Left cardiac atrium (tissue), 4 donors: ENCODE measurements at regions of chr12 and their contacts with region 1.

Region 1: DNA sequence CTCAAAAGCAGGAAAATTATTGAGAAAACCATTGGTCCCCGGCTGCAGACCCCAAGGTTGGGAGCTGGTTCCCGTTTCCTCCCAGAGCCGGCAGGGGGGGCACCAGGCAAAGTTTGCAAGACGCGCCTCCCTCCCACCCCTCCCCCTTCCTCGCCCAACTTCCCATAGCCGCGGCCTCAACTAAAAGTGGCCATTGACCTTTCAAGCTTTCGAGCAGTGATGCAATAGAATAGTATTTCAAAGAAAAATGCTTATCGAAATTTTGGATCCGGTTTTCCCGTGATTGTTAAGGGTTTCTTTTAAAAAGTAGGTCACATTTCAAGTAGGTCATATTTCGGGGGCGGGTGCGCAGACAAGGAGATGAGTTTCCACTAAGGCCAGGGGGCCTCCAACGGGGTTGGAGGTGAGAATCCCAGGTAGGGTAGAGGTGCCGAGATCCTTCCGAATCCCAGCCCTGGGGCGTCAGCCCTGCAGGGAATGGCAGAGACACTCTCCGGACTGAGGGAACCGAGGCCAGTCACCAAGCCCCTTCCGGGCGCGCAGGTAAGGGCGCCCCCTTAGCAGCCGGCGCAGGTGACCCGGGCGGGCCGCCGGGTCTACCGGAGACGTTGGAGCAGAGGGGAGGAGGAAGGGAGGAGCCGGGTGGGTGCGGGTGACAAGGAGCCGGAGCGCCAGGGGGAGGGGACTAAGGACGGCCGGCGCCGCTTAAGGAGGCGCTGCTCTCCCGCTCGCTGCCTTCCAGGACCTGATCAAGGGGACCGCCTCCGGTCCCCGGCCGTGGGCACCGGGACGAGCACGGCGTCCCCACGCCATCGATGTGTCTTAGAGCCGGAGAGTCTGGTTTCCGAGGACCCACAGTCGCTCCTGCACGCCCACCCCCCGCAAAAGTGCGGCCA is 2.6 kb upstream of the SOCS2 start:
- DNase-seq: peak; percentile 89
- ATAC-seq: peak; percentile 73 to 83

Region 2: GRCh38 chr12:93502802-93503623 is 66.9 kb before region 1 on chr12:
- intact Hi-C with region 1: loop called in 1 of 2 experiments (anchors 5 kb)
- DNase-seq: no peak
- ATAC-seq: no peak

Region 3: DNA sequence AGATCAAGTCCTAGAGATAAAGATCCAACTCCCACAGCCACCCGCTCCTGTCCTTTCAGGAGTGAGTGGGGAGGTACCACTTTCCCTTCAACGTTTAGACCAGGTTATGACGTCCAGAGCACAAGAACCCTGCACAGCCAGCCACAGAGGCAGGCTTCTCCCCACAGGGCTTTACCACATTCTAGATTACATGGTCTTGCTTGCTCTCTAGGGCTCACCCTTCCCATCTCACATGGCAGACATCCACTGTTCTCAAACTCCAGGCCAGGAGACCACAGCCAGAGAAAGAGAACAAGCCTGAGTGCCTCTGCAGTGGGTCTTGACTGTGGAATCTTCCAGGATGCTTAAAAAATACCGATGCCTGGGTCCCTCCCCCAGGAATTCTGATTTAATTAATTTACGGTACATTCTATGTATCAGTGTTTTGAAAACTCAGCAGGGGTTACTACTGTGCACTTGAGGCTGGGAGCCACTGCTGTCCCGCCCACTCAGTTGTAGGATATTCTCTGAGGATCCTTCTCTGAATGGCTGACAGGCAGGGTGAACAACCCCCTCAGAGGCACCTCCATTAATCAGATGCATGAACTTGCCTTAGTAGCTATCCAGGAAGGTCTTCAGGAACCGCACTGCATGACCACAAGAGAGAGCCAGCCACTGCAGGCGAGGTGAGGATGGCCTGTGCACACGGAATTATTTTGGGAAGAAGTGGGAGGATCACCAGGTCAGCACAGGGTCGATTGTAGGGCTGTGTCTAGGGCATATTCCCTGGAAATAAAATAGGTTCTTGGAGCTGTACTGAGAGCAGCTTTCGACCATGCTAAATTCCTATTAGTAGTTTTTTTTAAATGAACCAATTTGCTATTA is 18.9 kb before region 1 on chr12:
- intact Hi-C with region 1: no loop called
- DNase-seq: no peak
- ATAC-seq: no peak

Region 4: DNA sequence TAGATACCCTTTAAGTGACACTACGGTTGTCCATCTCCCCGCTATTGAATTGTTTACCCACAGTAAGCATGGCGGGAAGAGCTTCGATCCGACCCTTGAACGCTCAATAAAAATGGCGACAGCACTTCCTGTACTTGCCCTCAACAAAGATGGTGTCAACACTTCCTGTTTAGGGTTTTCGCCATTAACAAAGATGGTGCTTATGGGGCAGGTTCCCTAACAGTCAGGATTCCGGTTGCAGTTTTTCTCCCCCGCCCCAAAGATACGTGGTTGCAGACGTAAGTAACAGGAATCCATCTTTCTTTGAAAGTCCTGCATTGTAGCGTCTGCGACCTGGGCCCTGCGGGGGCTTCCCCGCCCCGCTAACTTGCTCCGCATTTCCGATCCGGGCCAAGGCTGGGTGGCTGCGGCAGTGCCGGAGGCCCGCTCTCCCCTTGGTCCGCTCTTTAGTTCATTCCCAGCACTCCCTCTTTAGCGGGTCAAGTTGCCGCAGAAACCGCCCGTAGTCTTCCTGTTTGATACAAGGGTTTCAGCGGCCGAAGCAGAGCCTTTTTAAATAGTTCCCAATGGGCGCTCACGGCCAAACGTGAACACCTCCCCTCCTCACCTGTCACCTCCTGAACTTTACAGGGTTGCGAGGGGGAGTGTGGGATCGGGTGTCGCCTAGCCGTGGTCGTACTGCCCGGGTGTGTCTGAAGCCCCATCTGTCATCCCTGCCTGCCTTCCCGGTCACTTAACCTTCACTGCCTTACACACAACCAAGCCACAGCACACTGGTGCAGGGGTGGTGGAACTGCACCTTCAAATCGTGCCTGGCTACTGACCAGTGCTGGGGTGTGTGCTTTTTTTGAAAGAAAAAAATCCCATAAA is 107.5 kb after region 1 on chr12 and contains the start of gene CRADD:
- intact Hi-C with region 1: loop called (anchors 2 to 5 kb)
- DNase-seq: peak; percentile 77
- ATAC-seq: peak; percentile 95 to 97
- total RNA-seq, gene CRADD: 33.8 to 33.9 TPM

Region 5: GRCh38 chr12:93742110-93742934 is 172.4 kb after region 1 on chr12:
- intact Hi-C with region 1: loop called (anchors 1 to 10 kb)
- DNase-seq: peak; percentile 81
- ATAC-seq: peak; percentile 97

Region 6: GRCh38 chr12:93979189-93979588 is 409.3 kb after region 1 on chr12:
- intact Hi-C with region 1: loop called (anchors 5 kb)
- DNase-seq: no peak
- ATAC-seq: peak in 1 of 2 donors; percentile 18

Region 7: GRCh38 chr12:94001691-94002090 is 431.8 kb after region 1 on chr12:
- intact Hi-C with region 1: no loop called
- DNase-seq: no peak
- ATAC-seq: no peak

Region 8: DNA sequence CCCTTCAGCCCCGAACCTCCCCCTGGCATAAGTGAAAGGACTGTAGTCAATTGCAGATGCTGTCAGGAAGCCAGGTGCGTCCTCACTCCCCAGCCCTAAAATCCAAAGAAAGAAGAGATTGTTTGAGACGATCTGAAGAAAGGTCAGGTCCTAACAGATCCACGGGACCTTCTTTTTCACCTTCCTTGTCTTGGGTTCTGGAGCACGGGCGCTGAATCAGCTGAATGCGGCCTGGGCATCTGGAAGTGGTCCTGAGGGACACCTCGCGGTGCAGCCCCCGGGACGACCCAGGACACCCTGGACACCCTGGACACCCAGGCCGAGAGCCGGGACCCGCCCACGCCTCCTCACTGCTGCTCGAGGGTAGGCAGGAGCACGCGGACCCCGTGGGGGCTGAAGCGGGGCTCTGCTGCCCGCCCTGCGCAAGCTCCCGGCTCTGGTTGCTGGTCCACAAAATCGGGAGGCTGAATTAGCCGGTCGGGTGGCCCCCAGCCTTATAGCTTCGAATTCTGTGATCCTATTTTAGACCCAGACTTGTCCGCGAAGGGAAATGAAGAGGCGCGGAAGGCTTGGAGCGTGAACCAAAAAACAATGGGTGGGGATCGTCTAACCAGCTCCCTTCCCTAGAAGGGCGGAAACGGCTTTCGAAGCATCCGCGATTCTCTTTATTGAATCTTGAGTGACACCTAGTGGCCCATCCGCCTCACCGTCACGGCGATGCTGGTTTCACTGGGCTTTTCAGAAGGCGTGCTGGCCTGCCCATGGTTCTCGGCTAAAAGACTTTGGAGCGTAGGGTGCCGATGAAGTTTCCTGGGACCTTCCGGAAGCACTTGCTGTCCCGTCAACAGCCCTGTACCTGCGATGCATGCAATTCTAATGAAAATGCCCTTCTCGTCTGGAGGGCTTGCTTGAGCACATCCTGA is 532.1 kb after region 1 on chr12:
- intact Hi-C with region 1: loop called (anchors 2 to 5 kb)
- DNase-seq: peak; percentile 89
- ATAC-seq: peak; percentile 86 to 92